Activated CD4-positive, alpha-beta memory T cell treated with anti-CD3 and anti-CD28 coated beads for 36 hours (primary cell): ENCODE measurements at regions of chr4 and their contacts with region 1.

Region 1: DNA sequence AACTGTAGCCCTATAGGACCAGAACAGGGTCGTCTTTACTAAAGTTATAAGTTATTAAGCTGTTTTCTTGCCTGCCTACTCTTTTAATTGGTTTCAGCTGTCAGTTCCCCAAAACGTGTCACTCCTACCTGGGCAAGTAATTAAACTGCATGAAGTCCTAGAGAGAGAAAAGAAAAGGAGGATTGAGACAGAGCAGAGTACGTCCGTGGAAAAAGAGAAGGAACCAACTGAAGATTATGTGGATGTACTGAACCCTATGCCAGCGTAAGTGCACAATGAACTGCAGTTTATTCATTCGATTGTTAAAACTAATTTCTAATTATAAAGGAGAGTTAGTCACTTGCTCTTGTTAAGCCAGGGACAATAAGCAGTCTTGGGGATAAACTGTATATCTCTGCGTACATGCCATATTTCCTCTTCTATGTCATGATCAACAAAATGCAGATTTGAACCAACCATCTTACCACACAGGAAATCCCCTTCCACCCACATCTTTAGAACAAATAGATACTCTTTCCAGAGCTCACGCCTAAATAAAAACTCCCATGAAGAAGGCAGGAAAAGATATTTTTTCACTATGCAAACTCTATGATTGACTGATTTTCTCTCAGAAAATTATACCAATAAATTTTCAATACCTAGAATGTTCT is 22.8 kb downstream of the STAP1 start:
- DNase-seq: no peak
- H3K4me3 Mint-ChIP-seq: peak overlapping the region; percentile 48
- H3K27ac Mint-ChIP-seq: peak overlapping the region; percentile 59
- H3K4me1 Mint-ChIP-seq: peaks cover 20% of the 10 kb centered on the region
- H3K27me3 Mint-ChIP-seq: no peaks in the 10 kb centered on the region

Region 2: GRCh38 chr4:67522851-67523671 is 58.3 kb before region 1 on chr4:
- CTCF ChIA-PET with region 1: no interaction called
- POLR2A ChIA-PET with region 1: no interaction called
- intact Hi-C with region 1: loop called (anchors 2 kb)
- DNase-seq: peak; percentile 43
- H3K4me3 Mint-ChIP-seq: peak overlapping the region; percentile 26
- H3K27ac Mint-ChIP-seq: peak overlapping the region; percentile 94
- H3K4me1 Mint-ChIP-seq: peaks cover 67% of the 10 kb centered on the region
- H3K27me3 Mint-ChIP-seq: no peaks in the 10 kb centered on the region

Region 3: DNA sequence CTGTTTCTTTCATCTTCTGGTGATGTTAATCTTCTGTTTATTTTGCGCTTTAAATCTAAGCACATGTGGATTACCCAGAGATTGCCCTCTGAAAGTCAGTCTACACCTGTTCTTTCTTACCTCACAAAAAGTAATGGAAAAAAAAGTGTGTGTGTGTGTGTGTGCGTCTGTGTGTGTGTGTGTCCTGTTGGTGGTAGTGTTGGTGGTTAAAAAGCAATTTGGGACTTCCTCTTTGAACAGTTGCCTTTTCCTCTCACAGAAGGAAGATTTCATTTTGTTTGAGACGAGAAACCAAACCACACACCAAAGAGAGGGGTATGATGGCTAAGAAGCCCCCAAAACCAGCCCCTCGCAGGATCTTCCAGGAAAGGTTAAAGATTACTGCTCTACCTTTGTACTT is 22.8 kb before region 1 on chr4 and contains the start of gene STAP1:
- CTCF ChIA-PET with region 1: no interaction called
- POLR2A ChIA-PET with region 1: no interaction called
- intact Hi-C with region 1: loop called (anchors 2 kb)
- DNase-seq: peak; percentile 27
- H3K4me3 Mint-ChIP-seq: peak within 1 kb of the TSS; percentile 76
- H3K27ac Mint-ChIP-seq: peak within 1 kb of the TSS; percentile 76
- H3K4me1 Mint-ChIP-seq: peaks cover 10% of the 10 kb centered on the region
- H3K27me3 Mint-ChIP-seq: no peaks in the 10 kb centered on the region
- total RNA-seq, gene STAP1: 5.5 to 5.9 TPM

Region 4: DNA sequence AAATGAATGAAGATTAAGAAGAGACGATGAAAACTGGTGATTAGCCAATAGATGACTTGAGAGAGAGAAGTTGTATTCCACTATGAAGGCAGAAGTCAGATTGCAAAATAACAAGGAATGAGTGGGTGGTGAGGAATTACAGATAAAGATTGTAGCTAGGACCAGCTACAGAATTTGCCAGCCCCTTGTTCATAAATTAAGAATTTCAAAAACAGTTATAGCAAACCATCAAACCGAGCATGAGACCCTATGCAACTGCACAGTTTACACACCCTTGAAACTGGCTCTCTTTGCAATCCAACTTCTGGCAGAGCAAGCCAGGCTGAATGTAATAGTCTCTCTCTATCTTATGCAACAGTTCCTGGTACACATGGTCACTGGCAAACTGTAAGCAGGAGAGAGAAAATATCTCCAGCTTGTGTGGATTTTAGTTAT is 12.4 kb after region 1 on chr4:
- CTCF ChIA-PET with region 1: no interaction called
- POLR2A ChIA-PET with region 1: no interaction called
- intact Hi-C with region 1: no loop called
- DNase-seq: no peak
- H3K4me3 Mint-ChIP-seq: no peak overlapping the region
- H3K27ac Mint-ChIP-seq: no peak overlapping the region
- H3K4me1 Mint-ChIP-seq: no peaks in the 10 kb centered on the region
- H3K27me3 Mint-ChIP-seq: no peaks in the 10 kb centered on the region

Region 5: GRCh38 chr4:67632492-67632891 is 51.2 kb after region 1 on chr4:
- CTCF ChIA-PET with region 1: no interaction called
- POLR2A ChIA-PET with region 1: no interaction called
- intact Hi-C with region 1: no loop called
- DNase-seq: no peak
- H3K4me3 Mint-ChIP-seq: no peak overlapping the region
- H3K27ac Mint-ChIP-seq: no peak overlapping the region
- H3K4me1 Mint-ChIP-seq: no peaks in the 10 kb centered on the region
- H3K27me3 Mint-ChIP-seq: no peaks in the 10 kb centered on the region

Region 6: DNA sequence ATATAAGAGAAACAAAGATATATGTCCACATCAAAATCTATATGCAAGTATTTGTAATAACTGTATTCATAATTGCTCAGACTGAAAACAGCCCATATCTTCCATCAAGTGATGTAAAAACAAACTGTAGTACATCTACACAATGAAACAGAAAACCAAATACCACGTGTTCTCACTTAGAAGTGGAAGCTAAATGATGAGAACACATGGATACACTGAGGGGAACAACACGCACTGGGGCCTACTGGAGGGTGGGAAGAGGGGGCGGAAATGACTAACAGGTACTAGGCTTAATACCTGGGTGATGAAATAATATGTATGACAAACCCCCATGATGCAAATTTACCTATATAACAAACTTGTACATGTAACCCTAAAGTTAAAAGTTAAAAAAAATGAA is 77.0 kb after region 1 on chr4:
- CTCF ChIA-PET with region 1: no interaction called
- POLR2A ChIA-PET with region 1: no interaction called
- intact Hi-C with region 1: loop called (anchors 2 kb)
- DNase-seq: peak; percentile 63
- H3K4me3 Mint-ChIP-seq: no peak overlapping the region
- H3K27ac Mint-ChIP-seq: peak overlapping the region; percentile 63
- H3K4me1 Mint-ChIP-seq: peaks cover 24% of the 10 kb centered on the region
- H3K27me3 Mint-ChIP-seq: no peaks in the 10 kb centered on the region

Region 7: GRCh38 chr4:67684839-67685531 is 103.7 kb after region 1 on chr4:
- CTCF ChIA-PET with region 1: no interaction called
- POLR2A ChIA-PET with region 1: no interaction called
- intact Hi-C with region 1: loop called (anchors 1 kb)
- DNase-seq: no peak
- H3K4me3 Mint-ChIP-seq: peak overlapping the region; percentile 14
- H3K27ac Mint-ChIP-seq: peak overlapping the region; percentile 81
- H3K4me1 Mint-ChIP-seq: peaks cover 32% of the 10 kb centered on the region
- H3K27me3 Mint-ChIP-seq: no peaks in the 10 kb centered on the region

Region 8: GRCh38 chr4:67820903-67821302 is 239.6 kb after region 1 on chr4:
- CTCF ChIA-PET with region 1: no interaction called
- POLR2A ChIA-PET with region 1: no interaction called
- intact Hi-C with region 1: no loop called
- DNase-seq: no peak
- H3K4me3 Mint-ChIP-seq: no peak overlapping the region
- H3K27ac Mint-ChIP-seq: no peak overlapping the region
- H3K4me1 Mint-ChIP-seq: no peaks in the 10 kb centered on the region
- H3K27me3 Mint-ChIP-seq: no peaks in the 10 kb centered on the region